GM12878 (cell line): ENCODE measurements at regions of chr4 and their contacts with region 1.

Region 1: DNA sequence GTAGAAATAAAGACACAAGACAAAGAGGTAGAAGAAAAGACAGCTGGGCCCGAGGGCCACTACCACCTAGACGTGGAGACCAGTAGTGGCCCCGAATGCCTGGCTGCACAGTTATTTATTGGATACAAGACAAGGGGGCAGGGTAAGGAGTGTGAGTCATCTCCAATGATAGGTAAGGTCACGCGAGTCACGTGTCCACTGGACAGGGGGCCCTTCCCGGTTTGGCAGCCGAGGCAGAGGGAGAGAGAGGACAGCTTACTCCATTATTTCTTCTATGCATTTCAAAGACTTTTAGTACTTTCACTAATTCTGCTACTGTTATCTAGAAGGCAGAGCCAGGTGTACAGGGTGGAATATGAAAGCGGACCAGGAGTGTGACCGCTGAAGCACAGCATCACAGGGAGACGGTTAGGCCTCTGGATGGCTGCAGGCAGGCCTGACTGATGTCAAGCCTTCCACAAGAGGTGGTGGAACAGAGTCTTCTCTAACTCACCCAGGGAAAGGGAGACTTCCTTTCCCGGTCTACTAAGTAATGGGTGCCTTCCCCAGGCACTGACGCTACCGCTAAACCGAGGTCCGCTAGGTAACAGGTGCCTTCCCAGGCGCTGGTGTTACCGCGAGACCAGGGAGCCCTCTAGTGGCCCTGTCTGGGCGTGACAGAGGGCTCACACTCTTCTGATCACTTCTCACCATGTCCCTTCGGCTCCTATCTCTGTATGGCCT is 44.9 kb downstream of the ZBTB49 start:
- DNase-seq: no peak
- ATAC-seq: peak; percentile 97
- H3K4me3 ChIP-seq: no peak overlapping the region
- H3K27ac ChIP-seq: no peak overlapping the region
- H3K4me1 ChIP-seq: peaks cover 3% of the 10 kb centered on the region; the same call in 1 of the 2 replicates
- H3K27me3 ChIP-seq: no peaks in the 10 kb centered on the region
- CTCF ChIP-seq: peak; percentile 79 to 90 (median 88)
- EP300 ChIP-seq: no peak
- POLR2A ChIP-seq: no peak
- RAD21 ChIP-seq: peak; percentile 86

Region 2: DNA sequence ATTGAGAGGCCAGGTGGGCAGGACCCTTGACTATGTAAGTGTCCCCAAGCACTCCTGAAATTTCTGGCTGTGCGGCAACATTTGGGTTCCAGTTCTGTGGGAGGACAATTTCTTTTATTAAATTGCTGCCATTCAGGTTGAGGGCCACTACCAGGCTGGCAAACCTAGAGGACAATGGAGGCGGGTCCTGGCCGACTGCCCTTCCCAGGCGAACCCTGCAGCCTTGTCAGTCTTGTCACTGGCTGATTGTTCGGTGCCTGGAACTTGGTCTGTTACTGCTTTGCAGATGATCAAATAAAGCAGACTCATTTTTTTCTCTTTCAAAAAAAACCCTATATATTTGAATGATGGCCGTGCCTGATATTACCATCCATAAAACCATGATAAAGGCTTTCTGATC is 80.3 kb before region 1 on chr4:
- CTCF ChIA-PET with region 1: interaction called, 58 read pairs
- POLR2A ChIA-PET with region 1: no interaction called
- RAD21 ChIA-PET with region 1: interaction called, 8 read pairs
- SMC1A ChIA-PET with region 1: interaction called, 5 read pairs
- in situ Hi-C with region 1: loop called (anchors 5 kb)
- intact Hi-C with region 1: loop called (anchors 1 kb)
- DNase-seq: no peak
- ATAC-seq: no peak
- H3K4me3 ChIP-seq: no peak overlapping the region
- H3K27ac ChIP-seq: no peak overlapping the region
- H3K4me1 ChIP-seq: no peaks in the 10 kb centered on the region
- H3K27me3 ChIP-seq: no peaks in the 10 kb centered on the region
- CTCF ChIP-seq: no peak
- EP300 ChIP-seq: no peak
- POLR2A ChIP-seq: no peak
- RAD21 ChIP-seq: no peak

Region 3: GRCh38 chr4:4260253-4260652 is 74.7 kb before region 1 on chr4:
- CTCF ChIA-PET with region 1: interaction called, 29 read pairs
- POLR2A ChIA-PET with region 1: interaction called, 3 read pairs
- RAD21 ChIA-PET with region 1: interaction called, 3 read pairs
- SMC1A ChIA-PET with region 1: no interaction called
- in situ Hi-C with region 1: no loop called
- intact Hi-C with region 1: loop called (anchors 2 kb)
- DNase-seq: no peak
- ATAC-seq: peak; percentile 95
- H3K4me3 ChIP-seq: no peak overlapping the region
- H3K27ac ChIP-seq: no peak overlapping the region
- H3K4me1 ChIP-seq: no peaks in the 10 kb centered on the region
- H3K27me3 ChIP-seq: no peaks in the 10 kb centered on the region
- CTCF ChIP-seq: peak; percentile 34 to 51 (median 47); a peak in 5 of 6 replicates
- EP300 ChIP-seq: no peak
- POLR2A ChIP-seq: no peak
- RAD21 ChIP-seq: peak; percentile 37